ENCODE measurements at regions of chr22 and their contacts with region 1.

Region 1: DNA sequence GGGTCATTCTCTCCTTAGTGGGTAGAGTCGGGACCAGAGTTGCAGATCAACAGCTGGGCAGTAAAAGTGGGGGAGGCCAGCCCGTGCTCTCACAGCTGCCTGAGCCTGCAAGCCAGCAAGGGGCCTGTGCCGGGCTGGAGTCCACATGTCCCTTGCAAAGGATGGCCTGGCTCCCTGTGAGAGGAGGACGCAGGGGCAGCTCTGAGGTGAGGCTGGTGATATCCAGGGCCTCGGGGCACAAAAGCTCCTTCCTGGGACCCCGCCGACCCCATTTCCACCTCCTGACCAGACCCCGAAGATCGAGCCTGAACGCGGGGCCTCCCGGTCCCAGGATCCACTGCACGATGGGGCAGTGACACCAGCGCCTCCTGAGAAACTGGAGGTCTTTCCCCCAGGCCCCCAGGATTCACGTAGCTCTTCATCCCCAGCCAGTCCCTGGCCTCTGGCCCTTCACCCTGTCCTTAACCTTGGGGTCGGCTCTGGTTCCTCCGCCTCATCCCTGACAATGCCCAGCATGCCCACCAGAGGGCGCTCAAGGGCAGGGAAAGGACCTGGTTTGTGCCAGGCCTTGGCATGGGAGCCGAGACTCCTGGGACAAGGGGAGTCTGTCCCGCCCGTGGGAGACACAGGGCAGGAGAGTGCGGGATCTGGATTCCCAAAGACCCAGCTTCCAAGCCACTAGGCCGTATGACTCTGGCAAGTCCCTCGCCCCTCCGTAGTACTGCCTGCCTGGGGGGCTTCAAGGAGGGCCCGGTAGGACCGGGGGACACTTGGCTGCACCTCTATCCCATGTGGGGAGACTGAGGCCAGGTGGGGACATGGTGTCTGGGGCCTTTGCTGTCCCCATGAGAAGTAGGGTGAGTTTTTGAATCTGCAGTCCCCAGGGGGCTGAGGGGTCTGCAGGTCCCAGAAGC is 17.8 kb upstream of the WNT7B start:
- DNase-seq: no peak
- ATAC-seq: peak; percentile 68
- H3K4me3 ChIP-seq: no peak overlapping the region
- H3K27ac ChIP-seq: no peak overlapping the region
- H3K4me1 ChIP-seq: peaks cover 22% of the 10 kb centered on the region
- H3K27me3 ChIP-seq: peaks cover 6 to 69% of the 10 kb centered on the region in 2 experiments
- CTCF ChIP-seq: peak; percentile 96
- EP300 ChIP-seq: no peak
- POLR2A ChIP-seq: no peak
- RAD21 ChIP-seq: peak; percentile 91

Region 2: GRCh38 chr22:45817745-45818423 is 176.9 kb before region 1 on chr22:
- CTCF ChIA-PET with region 1: no interaction called
- POLR2A ChIA-PET with region 1: no interaction called
- in situ Hi-C with region 1: no loop called
- intact Hi-C with region 1: no loop called
- DNase-seq: peak; percentile 16
- ATAC-seq: peak; percentile 71
- H3K4me3 ChIP-seq: no peak overlapping the region
- H3K27ac ChIP-seq: peak overlapping the region; percentile 53
- H3K4me1 ChIP-seq: peaks cover 25% of the 10 kb centered on the region
- H3K27me3 ChIP-seq: no peaks in the 10 kb centered on the region; a peak in 1 of 5 replicates
- CTCF ChIP-seq: no peak
- EP300 ChIP-seq: no peak
- POLR2A ChIP-seq: no peak
- RAD21 ChIP-seq: no peak

Region 3: DNA sequence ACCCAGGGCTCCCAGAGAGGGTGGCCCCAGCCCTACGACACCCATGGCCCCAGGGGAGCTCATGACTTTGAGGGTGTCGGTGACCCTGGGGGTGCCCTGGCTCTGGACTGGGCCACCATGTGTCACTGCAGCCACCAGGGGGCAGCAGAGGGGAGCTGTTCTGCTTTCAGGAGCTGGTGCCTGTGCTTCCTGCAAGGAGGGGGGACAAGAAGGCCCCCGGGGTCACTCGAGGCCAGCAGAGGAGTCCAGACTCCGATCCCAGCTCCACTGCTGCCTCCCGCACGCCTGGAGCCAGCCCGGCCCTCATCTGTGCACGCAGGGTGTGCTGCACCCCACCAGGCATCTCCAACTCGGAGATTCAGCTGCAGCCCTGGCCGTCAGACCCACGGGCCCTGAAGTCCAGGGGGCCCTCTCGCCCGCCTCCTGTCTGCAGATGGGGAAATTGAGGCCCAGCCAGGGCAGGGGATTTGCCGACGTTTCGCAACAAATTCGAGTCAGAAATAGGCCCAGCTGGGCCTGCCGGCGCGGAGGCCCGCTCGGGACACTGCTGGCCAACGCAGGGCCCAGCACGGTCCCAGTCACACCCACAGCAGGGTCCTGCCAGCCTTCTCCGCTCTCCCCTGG is 11.7 kb after region 1 on chr22:
- CTCF ChIA-PET with region 1: interaction called, 11 read pairs
- POLR2A ChIA-PET with region 1: interaction called, 11 read pairs
- in situ Hi-C with region 1: no loop called
- intact Hi-C with region 1: no loop called
- DNase-seq: peak; percentile 79
- ATAC-seq: peak; percentile 81
- H3K4me3 ChIP-seq: peak overlapping the region; percentile 24 to 73 (median 52); a peak in 5 of 6 replicates
- H3K27ac ChIP-seq: no peak overlapping the region
- H3K4me1 ChIP-seq: peaks cover 24% of the 10 kb centered on the region
- H3K27me3 ChIP-seq: peaks cover 4 to 16% of the 10 kb centered on the region in 2 experiments; a peak in 2 of 5 replicates
- CTCF ChIP-seq: peak; percentile 96
- EP300 ChIP-seq: no peak
- POLR2A ChIP-seq: no peak
- RAD21 ChIP-seq: peak; percentile 95

Region 4: GRCh38 chr22:46035742-46036557 is 41.2 kb after region 1 on chr22:
- CTCF ChIA-PET with region 1: no interaction called
- POLR2A ChIA-PET with region 1: no interaction called
- in situ Hi-C with region 1: loop called (anchors 5 kb)
- intact Hi-C with region 1: loop called (anchors 5 kb)
- DNase-seq: peak; percentile 95
- ATAC-seq: peak; percentile 93
- H3K4me3 ChIP-seq: peak overlapping the region; percentile 64 to 85 (median 69)
- H3K27ac ChIP-seq: peak overlapping the region; percentile 69
- H3K4me1 ChIP-seq: peaks cover 39% of the 10 kb centered on the region
- H3K27me3 ChIP-seq: peaks cover 3 to 12% of the 10 kb centered on the region in 2 experiments; a peak in 3 of 5 replicates
- CTCF ChIP-seq: no peak
- EP300 ChIP-seq: peak in 1 of 2 experiments; percentile 7; a peak in 1 of 4 replicates
- POLR2A ChIP-seq: peak; percentile 71 to 86
- RAD21 ChIP-seq: no peak

Region 5: GRCh38 chr22:46087336-46088277 is 92.9 kb after region 1 on chr22:
- CTCF ChIA-PET with region 1: no interaction called
- POLR2A ChIA-PET with region 1: no interaction called
- in situ Hi-C with region 1: no loop called
- intact Hi-C with region 1: no loop called
- DNase-seq: no peak
- ATAC-seq: peak; percentile 56
- H3K4me3 ChIP-seq: peak overlapping the region; percentile 10 to 51 (median 41); a peak in 4 of 6 replicates
- H3K27ac ChIP-seq: no peak overlapping the region
- H3K4me1 ChIP-seq: peaks cover 40% of the 10 kb centered on the region
- H3K27me3 ChIP-seq: peaks cover 8 to 37% of the 10 kb centered on the region in 2 experiments; a peak in 4 of 5 replicates
- CTCF ChIP-seq: no peak
- EP300 ChIP-seq: no peak
- POLR2A ChIP-seq: no peak
- RAD21 ChIP-seq: peak; percentile 21; the same call in 1 of the 2 replicates

Region 6: DNA sequence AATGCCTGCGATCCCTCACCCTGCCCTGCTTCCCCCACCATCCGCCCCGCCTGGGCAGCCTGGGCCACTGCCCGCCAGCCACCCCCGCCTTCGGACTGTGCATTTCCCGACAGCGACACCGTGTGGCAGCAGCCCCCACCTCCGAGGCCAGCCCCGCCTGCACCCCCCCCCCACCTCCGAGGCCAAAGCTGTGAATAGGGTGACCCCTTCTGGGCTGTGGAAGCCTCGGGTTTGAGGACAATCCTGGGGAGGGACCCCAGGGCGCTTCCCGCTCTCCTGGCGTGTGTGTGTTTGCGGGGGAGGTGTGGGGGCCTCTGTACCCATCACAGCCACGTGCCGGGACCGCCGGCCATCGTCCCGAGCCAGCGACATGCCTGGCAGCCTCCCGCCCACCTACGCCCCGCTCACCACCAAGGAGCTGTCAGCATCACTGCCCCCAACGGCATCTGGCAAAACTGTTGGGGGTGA is 121.8 kb after region 1 on chr22:
- CTCF ChIA-PET with region 1: interaction called, 86 read pairs
- POLR2A ChIA-PET with region 1: interaction called, 4 read pairs
- in situ Hi-C with region 1: no loop called
- intact Hi-C with region 1: loop called (anchors 1 kb)
- DNase-seq: peak; percentile 74
- ATAC-seq: peak; percentile 81
- H3K4me3 ChIP-seq: no peak overlapping the region
- H3K27ac ChIP-seq: no peak overlapping the region
- H3K4me1 ChIP-seq: peaks cover 26% of the 10 kb centered on the region
- H3K27me3 ChIP-seq: peaks cover 2 to 46% of the 10 kb centered on the region in 2 experiments; a peak in 3 of 5 replicates
- CTCF ChIP-seq: peak; percentile 99
- EP300 ChIP-seq: no peak
- POLR2A ChIP-seq: no peak
- RAD21 ChIP-seq: peak; percentile 98

Measured in HepG2 (cell line).